ENCODE measurements at regions of chr22 and their contacts with region 1.

Region 1: GRCh38 chr22:42533638-42533977 is 14.0 kb upstream of the RRP7A start:
- DNase-seq: no peak

Region 2: GRCh38 chr22:42236268-42236667 is 297.3 kb before region 1 on chr22:
- intact Hi-C with region 1: loop called in 1 of 2 experiments (anchors 5 kb)
- DNase-seq: no peak

Measured in posterior vena cava (tissue), 2 donors.